RWPE1 (cell line): ENCODE measurements at regions of chr5 and their contacts with region 1.

Region 1: DNA sequence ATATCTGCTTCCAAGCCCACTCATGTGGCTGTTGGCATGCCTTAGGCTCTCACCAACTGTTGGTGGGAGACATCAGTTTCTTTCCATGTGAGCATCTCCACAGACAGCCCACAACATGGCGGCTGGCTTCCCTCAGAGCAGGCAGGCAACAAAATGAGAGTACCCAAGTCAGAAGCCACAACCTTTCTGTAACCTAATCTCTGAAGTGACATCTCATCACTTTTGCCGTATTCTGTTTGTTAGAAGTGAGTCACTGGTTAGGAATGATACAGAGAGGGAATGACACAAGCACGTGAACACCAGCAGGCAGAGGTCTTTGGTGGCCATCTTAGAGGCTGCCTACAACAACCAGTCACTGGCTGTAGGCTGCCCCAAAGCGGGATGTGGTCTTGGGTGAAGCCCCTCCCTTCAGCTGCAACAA is 88.6 kb upstream of the RASGRF2 start:
- DNase-seq: peak; percentile 34
- H3K27ac ChIP-seq: no peak overlapping the region
- CTCF ChIP-seq: no peak

Region 2: DNA sequence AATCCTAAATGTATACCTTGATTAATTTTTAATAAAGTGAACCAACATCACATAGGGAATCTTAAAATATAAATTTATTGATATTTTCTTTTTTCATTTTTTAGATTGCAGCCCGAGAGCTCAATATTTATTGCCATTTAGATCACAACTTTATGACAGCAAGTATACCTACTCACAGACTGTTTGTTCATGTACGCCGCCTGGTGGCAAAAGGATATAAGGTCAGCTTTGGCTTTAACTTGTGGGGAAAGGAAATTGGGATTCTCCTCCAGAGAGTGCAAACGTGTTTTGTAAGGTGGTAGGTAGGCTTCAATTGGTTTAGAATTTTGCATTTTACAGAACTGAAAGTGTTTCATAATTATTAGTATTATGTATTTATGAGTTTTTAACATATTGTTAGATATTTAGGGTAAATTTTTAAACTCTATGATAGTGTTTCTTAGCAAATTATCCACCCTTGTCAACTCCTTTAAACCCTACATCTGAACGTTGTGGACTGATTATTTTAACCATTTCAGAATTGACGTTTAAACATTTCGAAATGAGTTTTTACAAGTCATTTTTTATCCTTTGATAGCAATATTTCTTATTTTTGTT is 199.3 kb before region 1 on chr5:
- CTCF ChIA-PET with region 1: no interaction called
- POLR2A ChIA-PET with region 1: no interaction called
- DNase-seq: peak; percentile 71
- H3K27ac ChIP-seq: no peak overlapping the region
- CTCF ChIP-seq: peak; percentile 95

Region 3: GRCh38 chr5:80754900-80755299 is 116.7 kb before region 1 on chr5:
- CTCF ChIA-PET with region 1: no interaction called
- POLR2A ChIA-PET with region 1: no interaction called
- DNase-seq: no peak
- H3K27ac ChIP-seq: no peak overlapping the region
- CTCF ChIP-seq: no peak

Region 4: GRCh38 chr5:80884929-80885328 is 13.4 kb after region 1 on chr5:
- CTCF ChIA-PET with region 1: interaction called, 10 read pairs
- POLR2A ChIA-PET with region 1: no interaction called
- DNase-seq: no peak
- H3K27ac ChIP-seq: no peak overlapping the region
- CTCF ChIP-seq: no peak

Region 5: DNA sequence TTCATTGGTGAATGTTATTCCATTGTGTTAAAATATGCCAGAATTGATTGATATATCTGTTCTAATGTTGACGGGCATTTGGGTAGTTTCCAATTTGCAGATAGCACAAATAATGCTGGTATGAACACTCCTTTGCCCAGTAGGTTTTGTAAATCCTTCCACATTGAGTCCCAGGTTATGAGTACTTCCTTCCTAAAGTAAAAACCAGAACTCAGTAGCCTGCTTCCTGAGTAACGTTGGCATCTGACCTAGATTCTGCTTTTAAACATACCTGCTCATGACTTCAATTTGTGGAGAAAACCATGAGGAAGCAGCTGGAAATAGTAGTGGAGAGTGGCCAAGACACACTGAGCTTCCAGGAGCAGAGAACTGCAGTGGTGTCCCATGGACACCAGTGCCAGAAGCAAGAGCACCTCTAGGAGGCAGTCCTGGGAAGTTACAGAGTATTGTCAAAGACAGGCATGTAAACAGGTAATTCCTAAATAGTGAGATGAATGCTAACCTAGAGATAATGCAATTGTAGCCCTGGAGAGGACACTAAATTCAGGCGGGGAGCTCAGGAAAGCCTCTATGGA is 64.3 kb after region 1 on chr5:
- CTCF ChIA-PET with region 1: no interaction called
- POLR2A ChIA-PET with region 1: no interaction called
- DNase-seq: no peak
- H3K27ac ChIP-seq: no peak overlapping the region
- CTCF ChIP-seq: no peak

Region 6: GRCh38 chr5:81187885-81188284 is 316.3 kb after region 1 on chr5:
- CTCF ChIA-PET with region 1: no interaction called
- POLR2A ChIA-PET with region 1: no interaction called
- DNase-seq: no peak
- H3K27ac ChIP-seq: no peak overlapping the region
- CTCF ChIP-seq: no peak